AG04450 (cell line): ENCODE measurements at regions of chr1 and their contacts with region 1.

Region 1: GRCh38 chr1:17587989-17588685 is 48.6 kb downstream of the ARHGEF10L start:
- DNase-seq: no peak
- H3K4me3 ChIP-seq: 0 out of 2 replicates have a peak overlapping the region, but pooled peaks have one; percentile 13
- H3K27ac ChIP-seq: peak overlapping the region; percentile 82
- H3K27me3 ChIP-seq: no peaks in the 10 kb centered on the region
- CTCF ChIP-seq: no peak

Region 2: GRCh38 chr1:17531682-17532487 is 56.3 kb before region 1 on chr1:
- CTCF ChIA-PET with region 1: interaction called, 12 read pairs
- POLR2A ChIA-PET with region 1: interaction called, 5 read pairs
- DNase-seq: no peak
- H3K4me3 ChIP-seq: no peak overlapping the region
- H3K27ac ChIP-seq: peak overlapping the region; percentile 31
- H3K27me3 ChIP-seq: peaks cover 5% of the 10 kb centered on the region
- CTCF ChIP-seq: no peak

Region 3: GRCh38 chr1:17617787-17618557 is 29.8 kb after region 1 on chr1:
- CTCF ChIA-PET with region 1: no interaction called
- POLR2A ChIA-PET with region 1: no interaction called
- DNase-seq: no peak
- H3K4me3 ChIP-seq: peak overlapping the region; percentile 55
- H3K27ac ChIP-seq: peak overlapping the region; percentile 52
- H3K27me3 ChIP-seq: no peaks in the 10 kb centered on the region
- CTCF ChIP-seq: no peak